Ascending aorta (tissue), 2 donors: ENCODE measurements at regions of chr6 and their contacts with region 1.

Region 1: GRCh38 chr6:108835218-108835850 is 12.9 kb upstream of the ARMC2 start:
- DNase-seq: peak; percentile 58 to 94
- H3K4me3 ChIP-seq: no peak overlapping the region
- H3K27ac ChIP-seq: peak overlapping the region; percentile 9 to 30
- H3K4me1 ChIP-seq: peaks cover 0 to 11% of the 10 kb centered on the region in 2 donors
- H3K27me3 ChIP-seq: no peaks in the 10 kb centered on the region
- CTCF ChIP-seq: peak; percentile 83 to 93 (median 87)

Region 2: DNA sequence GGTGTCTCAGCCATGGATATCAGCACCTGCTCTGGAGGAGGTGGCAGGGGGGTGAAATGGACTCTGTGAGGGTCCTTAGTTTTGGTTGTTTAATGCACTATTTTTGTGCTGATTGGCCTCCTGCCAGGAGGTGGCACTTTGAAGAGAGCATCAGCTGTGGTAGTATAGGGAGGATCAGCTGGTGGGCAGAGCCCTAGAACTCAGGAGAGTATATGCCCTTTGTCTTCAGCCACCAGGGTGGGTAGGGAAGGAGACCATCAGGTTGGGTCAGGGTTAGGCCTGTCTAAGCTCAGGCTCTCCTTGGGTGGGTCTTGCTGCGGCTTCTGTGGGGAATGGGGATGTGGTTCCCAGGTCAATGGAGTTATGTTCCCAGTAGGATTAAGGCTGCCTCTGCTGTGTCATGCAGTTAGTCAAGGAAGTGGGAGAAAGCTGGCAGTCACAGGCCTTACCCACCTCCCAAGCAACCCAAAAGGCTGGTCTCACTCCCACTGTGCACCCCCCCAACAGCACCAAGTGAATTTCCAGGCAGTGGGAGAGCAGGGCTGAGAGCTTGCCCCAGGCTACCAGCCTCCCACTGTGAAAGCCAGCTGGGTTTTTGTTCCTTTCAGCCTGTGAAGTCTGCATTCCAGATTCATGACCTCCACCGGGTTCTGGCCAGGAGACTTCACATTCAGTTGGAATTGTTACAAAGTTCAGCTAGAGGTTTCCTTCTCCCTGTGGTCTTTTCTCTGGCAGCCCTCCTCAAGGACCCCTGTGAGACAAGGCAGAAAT is 755.1 kb before region 1 on chr6:
- intact Hi-C with region 1: no loop called
- DNase-seq: no peak
- H3K4me3 ChIP-seq: no peak overlapping the region
- H3K27ac ChIP-seq: no peak overlapping the region
- H3K4me1 ChIP-seq: peaks cover 2 to 3% of the 10 kb centered on the region in 2 donors
- H3K27me3 ChIP-seq: no peaks in the 10 kb centered on the region
- CTCF ChIP-seq: no peak

Region 3: DNA sequence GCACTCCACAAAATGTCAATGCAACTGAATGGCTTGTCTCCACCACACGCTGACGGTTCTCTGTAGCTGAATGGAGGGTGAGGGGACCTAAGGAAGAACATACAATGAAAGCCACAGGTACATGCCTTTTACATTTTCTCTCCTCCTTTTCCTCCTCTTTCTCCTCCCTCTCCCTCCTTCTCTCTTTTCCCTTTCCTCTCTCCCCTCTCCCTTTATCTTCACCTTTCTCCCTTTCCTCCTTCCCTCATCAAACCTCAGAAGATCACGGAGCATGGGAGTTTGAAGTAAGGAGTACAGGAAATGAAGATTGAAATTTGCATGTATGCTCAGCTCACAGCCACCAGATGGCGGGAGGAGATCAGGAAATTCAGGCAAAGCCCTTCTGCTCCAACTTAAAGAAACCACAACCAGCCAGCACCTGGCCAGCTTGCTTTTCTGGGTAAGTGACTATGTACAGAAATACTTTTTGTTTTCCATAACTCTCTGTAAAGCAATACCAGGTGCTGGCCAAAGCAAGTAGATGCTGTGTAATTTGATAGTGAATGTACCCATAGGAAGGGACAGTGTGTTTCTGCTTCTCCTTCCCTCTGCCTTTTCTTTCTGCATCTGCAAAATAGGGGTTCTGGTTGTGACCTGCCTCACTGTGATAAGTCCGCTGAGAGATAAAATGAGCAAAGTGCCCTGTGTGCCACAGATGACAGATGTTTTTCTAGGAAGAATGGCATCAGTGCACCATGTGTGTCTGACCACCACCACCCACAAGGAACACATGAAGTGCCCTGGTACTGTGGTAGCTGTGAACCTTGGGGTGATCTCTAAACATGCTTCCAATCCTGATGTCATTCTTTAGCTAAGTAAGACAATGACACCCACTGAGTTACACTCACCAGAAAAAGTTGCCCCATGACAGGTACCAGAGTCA is 293.2 kb before region 1 on chr6:
- intact Hi-C with region 1: loop called (anchors 1 kb)
- DNase-seq: peak in 1 of 2 donors; percentile 75
- H3K4me3 ChIP-seq: no peak overlapping the region
- H3K27ac ChIP-seq: no peak overlapping the region
- H3K4me1 ChIP-seq: no peaks in the 10 kb centered on the region
- H3K27me3 ChIP-seq: no peaks in the 10 kb centered on the region
- CTCF ChIP-seq: peak; percentile 79 to 83 (median 82)

Region 4: DNA sequence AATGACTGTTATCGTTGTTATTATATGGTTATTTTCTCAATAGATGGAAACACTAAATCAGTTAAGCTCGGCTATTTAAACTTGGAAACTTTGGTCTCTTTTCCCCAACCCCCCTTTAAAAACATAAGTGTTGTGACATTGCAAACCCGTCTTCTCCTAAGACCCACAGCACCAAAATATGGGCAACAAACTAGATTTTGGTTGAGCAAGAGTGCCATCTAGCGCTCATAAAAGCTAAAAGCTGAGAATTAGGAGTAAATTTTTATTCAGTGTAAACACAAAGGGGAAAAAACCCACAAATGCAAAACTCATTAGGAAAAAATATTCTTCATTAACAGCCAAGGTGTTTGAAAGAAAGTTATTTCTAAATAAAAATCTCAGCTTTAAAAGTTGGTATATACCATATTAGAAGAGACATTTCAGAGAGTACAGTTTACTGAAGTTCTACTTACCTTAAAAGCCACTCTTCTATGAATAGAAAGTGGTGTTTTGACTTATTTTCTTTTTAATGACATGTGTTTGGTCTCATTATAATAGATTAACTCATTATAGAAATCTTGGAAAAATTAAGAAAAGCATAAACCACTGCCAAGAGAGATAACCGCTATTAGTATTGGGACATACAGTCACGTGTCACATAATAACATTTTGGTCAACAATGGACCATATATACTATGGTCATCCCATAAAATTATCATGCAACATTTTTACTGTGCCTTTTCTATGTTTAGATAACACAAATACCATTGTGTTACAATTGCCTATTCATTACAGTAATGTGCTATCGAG is 238.2 kb after region 1 on chr6:
- intact Hi-C with region 1: loop called (anchors 5 kb)
- DNase-seq: no peak
- H3K4me3 ChIP-seq: no peak overlapping the region
- H3K27ac ChIP-seq: no peak overlapping the region
- H3K4me1 ChIP-seq: peaks cover 0 to 3% of the 10 kb centered on the region in 2 donors
- H3K27me3 ChIP-seq: no peaks in the 10 kb centered on the region
- CTCF ChIP-seq: peak; percentile 45 to 68 (median 63)